CD14-positive monocyte (primary cell): ENCODE measurements at regions of chr4 and their contacts with region 1.

Region 1: DNA sequence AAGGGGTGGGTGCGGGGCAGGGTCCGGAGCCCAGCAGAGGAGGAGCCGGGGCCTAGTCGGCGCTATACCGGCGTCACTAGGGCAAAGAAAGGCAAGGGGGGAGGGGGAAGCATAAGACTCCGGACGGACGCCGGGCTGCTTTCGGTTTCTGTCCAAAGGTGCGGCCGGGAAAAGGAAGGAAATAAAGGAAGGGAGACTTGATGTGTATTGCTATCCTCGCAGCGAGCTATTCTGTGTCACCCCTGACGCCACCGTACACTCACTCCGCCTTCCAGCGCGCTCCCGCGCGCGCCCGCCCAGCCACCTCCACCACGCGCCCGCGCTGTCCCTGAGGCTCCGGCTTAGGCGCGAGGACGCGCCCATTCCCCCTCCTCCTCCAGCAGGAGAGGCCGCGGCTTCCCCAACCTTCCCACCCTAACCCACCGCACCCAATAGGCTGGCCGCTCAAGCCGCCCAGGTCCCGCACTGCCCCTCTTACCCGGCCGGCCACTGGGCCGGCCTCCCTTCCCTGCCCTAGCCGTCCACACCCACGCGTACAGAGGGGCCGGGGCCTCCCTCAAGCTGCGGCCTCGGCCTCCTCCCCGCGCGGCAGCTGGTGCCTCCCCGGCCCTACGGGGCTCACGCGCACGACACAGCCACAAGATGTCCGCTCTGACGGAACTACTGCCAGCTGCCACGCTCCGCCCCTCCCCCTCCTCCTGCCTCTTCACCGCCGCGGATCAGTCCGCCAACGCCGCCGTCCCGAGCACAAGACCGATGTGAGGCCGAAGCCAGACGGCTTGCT is at the start of gene UBE2D3:
- DNase-seq: peak; percentile 89 to 96 (median 96)
- H3K4me3 ChIP-seq: peak within 1 kb of the TSS; percentile 98 to 100 (median 99)
- H3K4me3 Mint-ChIP-seq: peak within 1 kb of the TSS in 1 of 2 donors; percentile 97
- H3K27ac ChIP-seq: peak within 1 kb of the TSS; percentile 99 to 100
- H3K27ac Mint-ChIP-seq: no peak within 1 kb of the TSS
- H3K4me1 ChIP-seq: peaks cover 36 to 41% of the 10 kb centered on the region in 2 donors
- H3K4me1 Mint-ChIP-seq: peaks cover 34% of the 10 kb centered on the region
- H3K27me3 ChIP-seq: no peaks in the 10 kb centered on the region
- H3K27me3 Mint-ChIP-seq: no peaks in the 10 kb centered on the region
- CTCF ChIP-seq: no peak
- polyA plus RNA-seq, gene UBE2D3: 340 to 499 (median 457) TPM

Region 2: DNA sequence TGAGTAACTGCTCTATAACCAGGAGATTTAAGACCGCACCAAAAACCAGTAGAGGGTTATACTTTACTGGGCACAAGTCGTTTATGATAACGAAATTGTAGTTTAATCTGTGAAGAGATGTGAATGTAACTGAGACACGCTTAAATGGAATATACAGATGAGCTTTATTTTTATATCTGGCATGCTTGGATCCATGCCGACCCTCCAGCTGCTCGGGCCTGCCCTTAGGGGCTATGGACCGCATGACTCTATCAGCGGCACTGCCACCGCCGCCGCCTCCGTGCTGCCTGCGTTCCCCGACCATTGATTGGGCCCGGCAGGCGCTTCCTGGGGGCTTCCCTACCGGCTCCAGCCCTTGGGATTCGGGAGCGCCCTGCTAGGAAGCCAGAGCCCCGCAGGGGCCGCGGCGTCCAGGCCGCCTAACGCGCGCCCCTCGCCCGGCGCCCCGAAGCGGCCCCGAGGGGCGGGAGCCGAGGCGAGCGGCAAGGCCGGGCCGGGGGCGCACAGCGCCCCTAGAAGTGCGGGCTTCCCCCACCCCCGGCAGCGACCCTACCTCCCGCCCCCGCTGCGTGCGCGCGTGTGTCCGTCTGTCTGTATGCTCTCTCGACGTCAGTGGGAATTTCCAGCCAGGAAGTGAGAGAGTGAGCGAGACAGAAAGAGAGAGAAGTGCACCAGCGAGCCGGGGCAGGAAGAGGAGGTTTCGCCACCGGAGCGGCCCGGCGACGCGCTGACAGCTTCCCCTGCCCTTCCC is 326.2 kb before region 1 on chr4 and contains the start of gene NFKB1:
- intact Hi-C with region 1: loop called in 1 of 2 experiments (anchors 2 kb)
- DNase-seq: peak; percentile 95 to 98 (median 95)
- H3K4me3 ChIP-seq: peak within 1 kb of the TSS; percentile 89 to 98 (median 91)
- H3K4me3 Mint-ChIP-seq: peak within 1 kb of the TSS; percentile 96 to 98
- H3K27ac ChIP-seq: peak within 1 kb of the TSS; percentile 99 to 100
- H3K27ac Mint-ChIP-seq: peak within 1 kb of the TSS; percentile 97 to 100 (median 99)
- H3K4me1 ChIP-seq: peaks cover 27 to 38% of the 10 kb centered on the region in 2 donors
- H3K4me1 Mint-ChIP-seq: peaks cover 32% of the 10 kb centered on the region
- H3K27me3 ChIP-seq: no peaks in the 10 kb centered on the region
- H3K27me3 Mint-ChIP-seq: peaks cover 0 to 5% (median 4%) of the 10 kb centered on the region in 3 donors
- CTCF ChIP-seq: no peak
- polyA plus RNA-seq, gene NFKB1: 9.0 to 34.4 (median 17.8) TPM

Region 3: GRCh38 chr4:102687373-102687981 is 139.6 kb before region 1 on chr4:
- intact Hi-C with region 1: loop called in 1 of 2 experiments (anchors 10 kb)
- DNase-seq: peak; percentile 30 to 44 (median 37)
- H3K4me3 ChIP-seq: peak overlapping the region in 1 of 3 experiments; percentile 45
- H3K4me3 Mint-ChIP-seq: no peak overlapping the region
- H3K27ac ChIP-seq: peak overlapping the region; percentile 32 to 88
- H3K27ac Mint-ChIP-seq: no peak overlapping the region
- H3K4me1 ChIP-seq: peaks cover 31 to 38% of the 10 kb centered on the region in 2 donors
- H3K4me1 Mint-ChIP-seq: peaks cover 10% of the 10 kb centered on the region
- H3K27me3 ChIP-seq: no peaks in the 10 kb centered on the region
- H3K27me3 Mint-ChIP-seq: no peaks in the 10 kb centered on the region
- CTCF ChIP-seq: no peak

Region 4: DNA sequence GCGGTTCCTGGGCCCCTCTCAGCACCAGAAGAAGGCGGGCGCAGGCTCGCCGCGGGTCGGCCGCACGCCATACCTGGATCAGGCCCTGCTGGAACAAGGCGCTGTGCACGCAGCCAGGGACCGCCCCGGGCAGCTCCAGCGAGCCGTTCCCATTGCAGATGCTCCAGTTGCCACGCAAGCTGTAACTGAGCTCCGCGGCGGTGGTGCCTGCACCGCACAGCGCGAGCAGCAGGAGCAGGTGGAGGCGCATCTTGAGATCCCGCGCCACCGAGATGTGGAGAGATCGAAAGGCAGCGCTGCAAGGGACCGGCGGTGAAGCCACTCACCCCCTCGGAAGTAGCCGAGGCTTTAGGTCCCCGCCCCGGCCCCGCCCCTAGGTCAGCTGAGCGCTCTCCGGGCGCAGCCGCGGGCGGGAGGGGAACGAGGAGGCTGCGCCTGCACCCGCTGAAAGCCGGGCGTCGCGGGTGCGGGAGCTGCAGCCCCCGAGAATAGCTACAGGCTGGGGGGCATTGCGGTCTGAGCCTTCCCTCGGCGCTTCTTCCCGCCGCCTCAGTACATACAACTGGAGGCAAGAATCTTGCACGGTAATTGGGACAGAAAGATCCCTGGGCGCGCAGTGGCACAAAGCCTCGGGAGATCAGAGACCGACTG is 66.3 kb before region 1 on chr4 and contains the start of gene MANBA:
- intact Hi-C with region 1: loop called (anchors 5 to 10 kb)
- DNase-seq: peak; percentile 88 to 90 (median 88)
- H3K4me3 ChIP-seq: peak within 1 kb of the TSS; percentile 79 to 99 (median 95)
- H3K4me3 Mint-ChIP-seq: peak within 1 kb of the TSS; percentile 88 to 92
- H3K27ac ChIP-seq: peak within 1 kb of the TSS; percentile 99 to 100
- H3K27ac Mint-ChIP-seq: peak within 1 kb of the TSS; percentile 97 to 99 (median 98)
- H3K4me1 ChIP-seq: peaks cover 39 to 43% of the 10 kb centered on the region in 2 donors
- H3K4me1 Mint-ChIP-seq: peaks cover 46% of the 10 kb centered on the region
- H3K27me3 ChIP-seq: no peaks in the 10 kb centered on the region
- H3K27me3 Mint-ChIP-seq: peaks cover 0 to 4% (median 3%) of the 10 kb centered on the region in 3 donors
- CTCF ChIP-seq: no peak
- polyA plus RNA-seq, gene MANBA: 80.8 to 94.4 (median 88.7) TPM

Region 5: GRCh38 chr4:102858828-102859464 is 31.9 kb after region 1 on chr4:
- intact Hi-C with region 1: no loop called
- DNase-seq: no peak
- H3K4me3 ChIP-seq: no peak overlapping the region
- H3K4me3 Mint-ChIP-seq: no peak overlapping the region
- H3K27ac ChIP-seq: no peak overlapping the region
- H3K27ac Mint-ChIP-seq: no peak overlapping the region
- H3K4me1 ChIP-seq: peaks cover 18 to 27% of the 10 kb centered on the region in 2 donors
- H3K4me1 Mint-ChIP-seq: peaks cover 23% of the 10 kb centered on the region
- H3K27me3 ChIP-seq: no peaks in the 10 kb centered on the region
- H3K27me3 Mint-ChIP-seq: peaks cover 0 to 1% (median 0%) of the 10 kb centered on the region in 3 donors
- CTCF ChIP-seq: no peak

Region 6: GRCh38 chr4:102868781-102869568 is 41.9 kb after region 1 on chr4 and contains the start of gene CISD2:
- intact Hi-C with region 1: loop called (anchors 2 to 5 kb)
- DNase-seq: peak; percentile 85 to 90 (median 86)
- H3K4me3 ChIP-seq: peak within 1 kb of the TSS; percentile 83 to 97 (median 90)
- H3K4me3 Mint-ChIP-seq: peak within 1 kb of the TSS; percentile 93 to 97
- H3K27ac ChIP-seq: peak within 1 kb of the TSS; percentile 96
- H3K27ac Mint-ChIP-seq: peak within 1 kb of the TSS; percentile 96 to 99 (median 98)
- H3K4me1 ChIP-seq: peaks cover 25 to 44% of the 10 kb centered on the region in 2 donors
- H3K4me1 Mint-ChIP-seq: peaks cover 46% of the 10 kb centered on the region
- H3K27me3 ChIP-seq: no peaks in the 10 kb centered on the region
- H3K27me3 Mint-ChIP-seq: no peaks in the 10 kb centered on the region
- CTCF ChIP-seq: no peak
- polyA plus RNA-seq, gene CISD2: 4.5 to 30.2 (median 29.1) TPM